Activated CD4-positive, alpha-beta memory T cell treated with anti-CD3 and anti-CD28 coated beads, Interleukin-2, amount 10 ng/mL, durations not matched to agents 7 days and 5 days (primary cell): ENCODE measurements at regions of chr17 and their contacts with region 1.

Region 1: DNA sequence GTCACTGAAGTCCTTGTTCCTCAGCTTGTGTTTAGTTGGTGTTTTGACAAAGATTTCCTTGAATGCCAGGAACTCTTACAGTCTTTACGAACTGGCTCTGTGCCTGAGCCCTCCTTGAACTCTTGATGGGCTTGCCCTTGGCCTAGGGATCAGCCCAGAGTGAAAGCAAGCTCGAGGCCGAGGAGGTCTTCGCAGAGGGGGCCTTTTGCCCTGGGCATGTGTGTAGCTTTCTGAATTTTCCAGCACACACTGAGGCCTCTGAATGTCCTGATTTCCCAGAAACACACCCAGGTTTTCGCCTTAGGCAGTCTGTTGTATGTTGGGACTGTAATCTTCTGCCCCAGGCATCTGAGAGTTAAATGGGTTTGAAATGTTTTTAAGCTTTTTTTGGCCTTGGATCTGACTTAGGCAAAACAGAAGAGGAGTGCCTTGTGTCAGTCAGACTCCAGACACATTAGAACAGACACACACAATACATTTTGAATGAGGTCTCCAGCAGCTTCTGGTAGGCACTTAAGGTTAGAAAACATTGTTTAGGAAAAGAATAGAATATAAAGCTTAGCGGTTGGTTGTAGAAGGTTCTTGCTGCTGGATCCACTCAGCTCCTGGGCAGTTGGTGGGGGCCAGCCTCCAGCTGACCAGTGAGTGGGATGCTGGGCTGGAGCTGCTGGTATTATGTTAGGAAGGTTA is 17.1 kb downstream of the FOXK2 start:
- DNase-seq: no peak
- H3K4me3 Mint-ChIP-seq: peak overlapping the region; percentile 19
- H3K27ac Mint-ChIP-seq: peak overlapping the region; percentile 66
- H3K4me1 Mint-ChIP-seq: peaks cover 52% of the 10 kb centered on the region
- H3K27me3 Mint-ChIP-seq: no peaks in the 10 kb centered on the region

Region 2: GRCh38 chr17:82486186-82487094 is 50.2 kb before region 1 on chr17:
- CTCF ChIA-PET with region 1: no interaction called
- POLR2A ChIA-PET with region 1: no interaction called
- DNase-seq: peak; percentile 64
- H3K4me3 Mint-ChIP-seq: peak overlapping the region; percentile 14
- H3K27ac Mint-ChIP-seq: peak overlapping the region; percentile 86
- H3K4me1 Mint-ChIP-seq: peaks cover 39% of the 10 kb centered on the region
- H3K27me3 Mint-ChIP-seq: no peaks in the 10 kb centered on the region

Region 3: DNA sequence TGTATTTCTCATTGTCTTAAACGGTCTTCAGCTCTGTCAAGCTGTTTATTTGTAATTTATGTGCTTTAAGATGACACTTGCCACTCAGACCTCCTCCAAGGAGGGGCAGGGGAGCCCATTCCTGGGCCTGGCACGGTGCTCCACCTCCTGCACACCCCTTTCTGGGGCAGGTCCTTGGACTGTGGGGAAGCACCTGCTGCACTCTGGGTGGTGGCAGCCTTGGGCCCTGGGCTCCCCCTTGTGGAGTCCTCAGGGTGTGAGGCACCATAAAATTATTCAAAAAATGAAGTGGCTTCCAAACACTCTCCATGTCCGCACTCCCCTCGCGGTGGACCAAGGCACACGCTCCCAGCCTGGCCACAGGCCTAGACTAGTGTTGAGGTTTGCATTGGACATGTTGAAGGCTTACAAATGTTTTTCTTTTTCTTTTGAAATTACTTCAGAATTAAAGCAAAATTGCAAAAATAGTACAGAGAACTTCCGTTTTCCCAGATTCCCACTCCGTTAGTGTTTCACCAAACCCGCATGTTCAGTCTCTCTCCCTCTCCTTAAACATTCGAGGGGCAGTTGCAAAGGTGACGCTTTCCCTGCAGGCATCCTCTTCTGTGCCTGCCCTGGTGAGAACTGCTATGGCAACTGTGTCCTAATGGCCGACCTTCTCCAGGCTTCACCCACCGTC is 15.3 kb after region 1 on chr17:
- CTCF ChIA-PET with region 1: interaction called, 21 read pairs
- POLR2A ChIA-PET with region 1: interaction called, 3 read pairs
- DNase-seq: peak; percentile 79
- H3K4me3 Mint-ChIP-seq: no peak overlapping the region
- H3K27ac Mint-ChIP-seq: no peak overlapping the region
- H3K4me1 Mint-ChIP-seq: peaks cover 25% of the 10 kb centered on the region
- H3K27me3 Mint-ChIP-seq: no peaks in the 10 kb centered on the region